ENCODE measurements at regions of chr15 and their contacts with region 1.

Region 1: DNA sequence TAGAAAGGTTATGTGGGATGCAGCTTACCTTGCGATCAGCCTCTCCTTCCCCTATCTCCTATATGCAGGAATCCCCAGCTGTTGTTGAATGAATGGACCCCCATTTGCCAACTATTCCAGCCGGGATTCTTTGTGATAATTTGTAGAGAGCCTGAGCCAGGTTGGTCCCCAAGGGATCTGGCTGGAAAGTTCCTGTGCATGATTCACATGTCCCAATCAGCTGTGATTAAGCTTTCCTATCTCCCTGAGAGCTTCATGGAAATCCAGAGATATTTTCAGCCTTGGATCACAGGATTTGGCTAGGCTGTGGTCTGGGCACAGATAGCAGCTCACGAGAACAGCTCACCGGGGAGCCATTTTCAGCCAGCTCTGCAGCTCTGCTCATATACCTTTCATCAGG is 76.7 kb downstream of the ARNT2 start:
- DNase-seq: peak in 1 of 2 donors; percentile 86
- H3K4me3 ChIP-seq: no peak overlapping the region
- H3K27ac ChIP-seq: peak overlapping the region; percentile 42 to 71
- H3K4me1 ChIP-seq: peaks cover 3 to 19% of the 10 kb centered on the region in 2 donors
- H3K27me3 ChIP-seq: no peaks in the 10 kb centered on the region
- CTCF ChIP-seq: no peak

Region 2: GRCh38 chr15:80455668-80456442 is 25.1 kb before region 1 on chr15:
- intact Hi-C with region 1: no loop called
- DNase-seq: peak in 1 of 2 donors; percentile 73
- H3K4me3 ChIP-seq: no peak overlapping the region
- H3K27ac ChIP-seq: no peak overlapping the region
- H3K4me1 ChIP-seq: no peaks in the 10 kb centered on the region
- H3K27me3 ChIP-seq: no peaks in the 10 kb centered on the region
- CTCF ChIP-seq: peak; percentile 80 to 92 (median 89)

Region 3: DNA sequence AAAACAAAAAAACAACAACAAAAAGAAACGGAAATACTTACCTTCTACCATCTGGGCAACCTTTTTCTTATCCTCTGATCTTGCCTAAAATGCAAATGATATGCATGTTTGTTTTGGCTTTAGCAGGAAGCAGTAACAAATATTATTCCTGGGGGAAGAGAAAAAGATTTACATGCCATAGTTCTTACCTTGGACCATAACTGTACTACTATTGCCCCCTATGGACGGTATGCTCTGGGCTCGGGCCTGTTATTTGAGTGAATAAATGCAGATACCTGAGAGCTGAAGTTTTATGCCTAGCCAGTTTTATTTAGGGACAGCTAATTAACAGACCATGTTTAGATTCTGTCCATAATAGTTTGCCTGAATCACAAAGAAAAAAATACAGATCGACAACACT is 855.7 kb after region 1 on chr15:
- intact Hi-C with region 1: loop called (anchors 10 kb)
- DNase-seq: no peak
- H3K4me3 ChIP-seq: no peak overlapping the region
- H3K27ac ChIP-seq: no peak overlapping the region
- H3K4me1 ChIP-seq: peaks cover 14% of the 10 kb centered on the region in 2 donors
- H3K27me3 ChIP-seq: no peaks in the 10 kb centered on the region
- CTCF ChIP-seq: peak in 1 of 3 experiments; percentile 12